CD8-positive, alpha-beta T cell (primary cell): ENCODE measurements at regions of chr9 and their contacts with region 1.

Region 1: DNA sequence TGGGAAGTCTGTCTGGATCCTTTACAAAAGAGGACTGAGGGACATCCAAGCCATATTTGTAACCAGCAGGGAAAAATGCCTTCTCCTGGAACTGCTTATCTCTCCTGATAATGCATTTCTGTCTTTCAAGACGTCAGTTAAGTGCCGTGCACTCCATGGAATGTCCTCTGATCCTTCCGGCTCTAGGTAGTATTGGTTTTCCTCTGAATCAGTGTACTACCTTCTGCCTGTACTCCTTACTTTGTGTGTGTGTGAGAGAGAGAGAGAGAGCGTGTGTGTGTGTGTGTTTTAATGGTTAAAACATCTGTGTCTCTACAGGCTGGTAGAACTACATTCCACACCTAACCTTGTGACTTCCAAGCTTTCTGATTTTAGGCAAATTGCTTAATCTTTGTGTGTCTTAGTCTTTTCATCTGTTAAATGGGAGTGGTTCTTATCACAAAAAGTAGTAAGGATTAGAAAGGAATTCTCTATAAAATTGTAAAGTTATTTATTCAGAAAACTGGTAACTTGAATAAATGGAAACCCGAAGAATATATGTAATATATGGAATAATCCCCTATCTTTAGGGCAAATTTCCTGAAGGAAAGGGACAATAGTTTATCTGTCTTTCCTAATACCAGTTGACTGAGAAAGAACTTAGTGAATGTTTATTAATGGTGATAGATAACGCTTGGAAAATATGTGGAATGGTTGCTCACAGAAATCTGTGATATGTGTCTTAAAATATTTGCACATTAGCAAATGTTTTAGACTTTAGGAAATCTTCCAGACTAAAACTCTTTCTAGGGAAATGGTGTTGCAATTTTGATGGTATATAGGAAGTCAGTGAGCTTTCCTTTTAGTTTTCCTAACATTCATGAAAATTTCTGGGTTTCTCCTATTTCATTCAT is 90.1 kb downstream of the PIP5K1B start:
- DNase-seq: no peak
- ATAC-seq: no peak
- H3K4me3 ChIP-seq: no peak overlapping the region
- H3K4me3 Mint-ChIP-seq: no peak overlapping the region
- H3K27ac ChIP-seq: no peak overlapping the region
- H3K27ac Mint-ChIP-seq: no peak overlapping the region
- H3K4me1 ChIP-seq: no peaks in the 10 kb centered on the region
- H3K4me1 Mint-ChIP-seq: no peaks in the 10 kb centered on the region
- H3K27me3 ChIP-seq: no peaks in the 10 kb centered on the region
- H3K27me3 Mint-ChIP-seq: peaks cover 4% of the 10 kb centered on the region
- CTCF ChIP-seq: no peak

Region 2: DNA sequence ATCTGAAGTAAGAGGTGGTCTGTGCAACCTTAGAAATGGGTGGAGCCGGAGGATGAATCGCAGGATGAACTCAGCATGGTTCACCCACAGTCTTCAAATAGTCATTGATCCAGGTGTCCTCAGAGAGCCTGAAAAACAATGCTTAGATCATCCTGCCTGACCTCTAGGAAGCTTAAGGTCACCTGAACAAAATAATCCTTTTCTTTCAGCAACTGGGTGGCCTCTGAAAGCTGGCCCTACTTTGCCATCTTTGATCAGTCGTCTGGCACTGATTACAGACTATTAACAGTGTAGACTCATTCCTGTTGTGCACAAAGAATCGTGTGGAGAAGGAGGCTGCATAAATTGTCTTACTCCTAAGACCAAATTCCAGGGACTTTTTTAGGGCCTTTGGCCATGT is 39.4 kb before region 1 on chr9:
- CTCF ChIA-PET with region 1: no interaction called
- POLR2A ChIA-PET with region 1: no interaction called
- intact Hi-C with region 1: loop called in 1 of 2 experiments (anchors 5 kb)
- DNase-seq: no peak
- ATAC-seq: no peak
- H3K4me3 ChIP-seq: no peak overlapping the region
- H3K4me3 Mint-ChIP-seq: no peak overlapping the region
- H3K27ac ChIP-seq: no peak overlapping the region
- H3K27ac Mint-ChIP-seq: no peak overlapping the region
- H3K4me1 ChIP-seq: no peaks in the 10 kb centered on the region
- H3K4me1 Mint-ChIP-seq: no peaks in the 10 kb centered on the region
- H3K27me3 ChIP-seq: peaks cover 0 to 2% of the 10 kb centered on the region in 2 experiments
- H3K27me3 Mint-ChIP-seq: peaks cover 20% of the 10 kb centered on the region
- CTCF ChIP-seq: no peak